ENCODE measurements at regions of chr2 and their contacts with region 1.

Region 1: DNA sequence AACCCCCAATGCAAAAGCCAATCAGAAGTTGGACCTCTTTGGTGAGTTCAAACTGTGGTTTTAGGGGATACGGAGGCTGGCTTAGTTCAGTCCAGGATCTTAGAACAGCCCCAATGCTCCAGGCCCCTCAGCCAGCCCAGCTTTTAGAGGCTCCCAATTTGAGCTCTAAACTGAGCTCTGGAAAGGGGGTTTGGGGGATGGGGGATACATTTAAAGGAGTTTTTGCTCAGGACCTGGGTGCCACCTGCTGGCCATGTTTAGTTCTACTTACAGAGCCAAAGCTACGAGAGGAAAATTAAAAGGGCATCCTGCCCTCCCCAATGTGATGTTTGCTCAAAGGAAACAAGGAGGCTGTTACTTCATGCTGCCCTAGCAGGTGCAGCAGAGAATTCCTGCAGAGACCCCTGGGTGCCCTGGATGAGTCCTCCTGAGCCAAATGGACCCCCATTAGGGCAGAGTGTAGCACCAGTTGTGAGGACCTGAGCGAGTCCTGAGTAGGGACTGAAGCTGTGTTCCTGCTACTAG is 15.9 kb upstream of the TMEM214 start:
- DNase-seq: no peak
- H3K4me3 ChIP-seq: no peak overlapping the region
- H3K27ac ChIP-seq: peak overlapping the region in 2 of 8 donors; percentile 44 to 50
- H3K4me1 ChIP-seq: peaks cover 0 to 30% (median 5%) of the 10 kb centered on the region in 6 donors
- H3K27me3 ChIP-seq: no peaks in the 10 kb centered on the region
- CTCF ChIP-seq: peak in 10 of 11 experiments; percentile 25 to 77 (median 60)
- POLR2A ChIP-seq: no peak

Region 2: GRCh38 chr2:26959331-26959730 is 57.5 kb before region 1 on chr2:
- intact Hi-C with region 1: loop called (anchors 5 kb)
- DNase-seq: no peak
- H3K4me3 ChIP-seq: no peak overlapping the region
- H3K27ac ChIP-seq: no peak overlapping the region
- H3K4me1 ChIP-seq: peaks cover 0 to 15% (median 5%) of the 10 kb centered on the region in 6 donors
- H3K27me3 ChIP-seq: peaks cover 0 to 45% (median 3%) of the 10 kb centered on the region in 7 donors
- CTCF ChIP-seq: no peak
- POLR2A ChIP-seq: no peak